HEK293 (cell line): ENCODE measurements at regions of chr7 and their contacts with region 1.

Region 1: DNA sequence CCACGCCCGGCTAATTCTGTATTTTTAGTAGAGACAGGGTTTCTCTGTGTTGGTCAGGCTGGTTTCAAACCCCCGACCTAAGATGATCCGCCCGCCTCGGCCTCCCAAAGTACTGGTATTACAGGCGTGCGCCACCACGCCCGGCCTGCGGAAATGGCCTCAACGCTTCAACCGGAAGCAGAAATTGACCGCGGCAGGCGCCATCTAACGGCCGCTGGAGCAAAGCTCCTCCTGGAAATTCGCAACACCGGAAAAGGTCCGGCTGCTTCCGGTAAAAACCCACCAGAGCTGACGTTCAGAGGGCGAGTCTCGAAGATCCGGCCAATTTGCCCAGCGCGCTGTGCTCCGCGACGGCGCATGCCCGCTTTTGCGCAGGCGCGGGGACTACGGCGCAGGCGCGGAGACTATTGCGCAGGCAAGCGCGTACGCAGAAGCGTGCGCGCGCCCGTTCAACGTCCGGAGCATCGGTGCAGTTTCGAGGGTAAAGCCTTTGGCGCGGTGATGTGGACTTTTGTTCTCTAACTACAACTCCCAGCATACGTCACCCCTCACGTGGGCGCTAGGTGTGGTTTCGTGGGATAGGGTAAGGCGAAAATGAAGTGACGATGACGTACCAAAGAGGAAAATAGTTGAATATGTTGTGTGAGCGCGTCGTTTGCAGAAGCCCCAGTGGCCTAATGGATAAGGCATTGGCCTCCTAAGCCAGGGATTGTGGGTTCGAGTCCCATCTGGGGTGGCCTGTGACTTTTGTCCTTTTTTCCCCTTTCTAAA is 915 bp upstream of the FMC1 start:
- H3K4me3 ChIP-seq: peak overlapping the region; percentile 95
- H3K27ac ChIP-seq: peak overlapping the region; percentile 79
- H3K4me1 ChIP-seq: no peaks in the 10 kb centered on the region
- CTCF ChIP-seq: peak; percentile 97

Region 2: GRCh38 chr7:139359366-139360209 is 19.4 kb after region 1 on chr7 and contains the start of gene LUC7L2:
- CTCF ChIA-PET with region 1: no interaction called
- POLR2A ChIA-PET with region 1: interaction called, 35 read pairs
- H3K4me3 ChIP-seq: peak within 1 kb of the TSS; percentile 74
- H3K27ac ChIP-seq: peak within 1 kb of the TSS; percentile 95
- H3K4me1 ChIP-seq: peaks cover 7% of the 10 kb centered on the region; the same call in 1 of the 2 replicates
- CTCF ChIP-seq: peak; percentile 56

Region 3: GRCh38 chr7:139393621-139394211 is 53.5 kb after region 1 on chr7:
- CTCF ChIA-PET with region 1: no interaction called
- POLR2A ChIA-PET with region 1: no interaction called
- H3K4me3 ChIP-seq: no peak overlapping the region
- H3K27ac ChIP-seq: no peak overlapping the region
- H3K4me1 ChIP-seq: no peaks in the 10 kb centered on the region
- CTCF ChIP-seq: no peak

Region 4: GRCh38 chr7:139669106-139670061 is 329.2 kb after region 1 on chr7:
- CTCF ChIA-PET with region 1: no interaction called
- POLR2A ChIA-PET with region 1: no interaction called
- H3K4me3 ChIP-seq: no peak overlapping the region
- H3K27ac ChIP-seq: no peak overlapping the region
- H3K4me1 ChIP-seq: no peaks in the 10 kb centered on the region
- CTCF ChIP-seq: no peak